ENCODE measurements at regions of chr19 and their contacts with region 1.

Region 1: DNA sequence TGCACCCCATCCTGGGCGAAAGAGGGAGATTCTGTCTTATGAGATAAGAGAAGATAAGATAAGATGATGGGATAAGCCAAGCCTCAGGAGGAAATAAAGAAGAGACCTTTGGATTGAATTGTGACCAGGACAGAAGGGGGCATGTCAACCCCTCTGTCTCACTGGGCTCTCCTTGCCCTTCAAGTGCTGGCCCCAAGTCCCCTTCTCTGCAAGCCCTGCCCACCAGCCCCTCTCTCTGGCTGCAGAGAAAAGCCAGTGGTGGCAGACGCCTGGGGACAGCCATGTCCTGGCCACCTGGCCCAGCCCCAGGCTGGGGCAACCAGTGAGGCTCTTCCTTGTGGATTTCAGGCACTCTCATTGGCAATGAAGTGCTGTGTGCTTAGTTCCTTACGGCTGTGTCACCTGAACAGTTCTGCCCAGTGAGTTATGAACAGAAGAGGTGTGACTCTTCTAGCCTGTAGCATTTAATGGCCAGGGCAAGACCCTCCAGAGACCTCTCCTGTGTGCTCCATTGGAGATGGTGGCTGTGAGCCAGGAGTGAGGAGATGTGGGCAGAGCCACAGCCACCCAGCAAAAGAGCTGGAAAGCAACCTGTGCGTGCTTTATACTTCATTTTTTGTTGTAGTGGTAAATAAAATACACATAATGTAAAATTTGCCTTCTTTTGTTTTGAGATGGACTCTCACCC is 6.1 kb upstream of the BTBD2 start:
- DNase-seq: no peak
- ATAC-seq: no peak
- H3K4me3 ChIP-seq: no peak overlapping the region
- H3K27ac ChIP-seq: 0 out of 6 replicates have a peak overlapping the region, but pooled peaks of 1 of the 2 experiments have one; percentile 22
- H3K4me1 ChIP-seq: no peaks in the 10 kb centered on the region; the same call in 2 of the 3 replicates
- CTCF ChIP-seq: no peak
- EP300 ChIP-seq: no peak
- POLR2A ChIP-seq: no peak
- RAD21 ChIP-seq: no peak

Region 2: GRCh38 chr19:2041683-2042484 is 20.3 kb after region 1 on chr19:
- CTCF ChIA-PET with region 1: interaction called, 54 read pairs
- POLR2A ChIA-PET with region 1: no interaction called
- DNase-seq: peak; percentile 87 to 96
- ATAC-seq: peak; percentile 87 to 93
- H3K4me3 ChIP-seq: peak overlapping the region; percentile 37
- H3K27ac ChIP-seq: peak overlapping the region; percentile 96 to 100
- H3K4me1 ChIP-seq: peaks cover 70% of the 10 kb centered on the region
- CTCF ChIP-seq: no peak
- EP300 ChIP-seq: no peak
- POLR2A ChIP-seq: no peak
- RAD21 ChIP-seq: no peak

Region 3: GRCh38 chr19:2050991-2051772 is 29.6 kb after region 1 on chr19 and contains the start of gene MKNK2:
- CTCF ChIA-PET with region 1: interaction called, 19 read pairs
- POLR2A ChIA-PET with region 1: no interaction called
- DNase-seq: peak; percentile 41 to 79
- ATAC-seq: peak; percentile 51 to 69
- H3K4me3 ChIP-seq: peak within 1 kb of the TSS; percentile 99
- H3K27ac ChIP-seq: peak within 1 kb of the TSS; percentile 95 to 100
- H3K4me1 ChIP-seq: peaks cover 61% of the 10 kb centered on the region
- CTCF ChIP-seq: peak; percentile 23; the same call in 2 of the 3 replicates
- EP300 ChIP-seq: no peak
- POLR2A ChIP-seq: peak; percentile 98
- RAD21 ChIP-seq: no peak
- polyA plus RNA-seq, gene MKNK2: 56.7 and 58.4 TPM in 2 replicates

Region 4: GRCh38 chr19:2371656-2372055 is 350.1 kb after region 1 on chr19:
- CTCF ChIA-PET with region 1: no interaction called
- POLR2A ChIA-PET with region 1: no interaction called
- DNase-seq: no peak
- ATAC-seq: peak in 1 of 2 experiments; percentile 44; a peak in 1 of 6 replicates
- H3K4me3 ChIP-seq: no peak overlapping the region
- H3K27ac ChIP-seq: no peak overlapping the region
- H3K4me1 ChIP-seq: no peaks in the 10 kb centered on the region
- CTCF ChIP-seq: no peak
- EP300 ChIP-seq: no peak
- POLR2A ChIP-seq: no peak
- RAD21 ChIP-seq: no peak

Measured in A549 (cell line).